Vagina (tissue), 2 donors: ENCODE measurements at regions of chr2 and their contacts with region 1.

Region 1: DNA sequence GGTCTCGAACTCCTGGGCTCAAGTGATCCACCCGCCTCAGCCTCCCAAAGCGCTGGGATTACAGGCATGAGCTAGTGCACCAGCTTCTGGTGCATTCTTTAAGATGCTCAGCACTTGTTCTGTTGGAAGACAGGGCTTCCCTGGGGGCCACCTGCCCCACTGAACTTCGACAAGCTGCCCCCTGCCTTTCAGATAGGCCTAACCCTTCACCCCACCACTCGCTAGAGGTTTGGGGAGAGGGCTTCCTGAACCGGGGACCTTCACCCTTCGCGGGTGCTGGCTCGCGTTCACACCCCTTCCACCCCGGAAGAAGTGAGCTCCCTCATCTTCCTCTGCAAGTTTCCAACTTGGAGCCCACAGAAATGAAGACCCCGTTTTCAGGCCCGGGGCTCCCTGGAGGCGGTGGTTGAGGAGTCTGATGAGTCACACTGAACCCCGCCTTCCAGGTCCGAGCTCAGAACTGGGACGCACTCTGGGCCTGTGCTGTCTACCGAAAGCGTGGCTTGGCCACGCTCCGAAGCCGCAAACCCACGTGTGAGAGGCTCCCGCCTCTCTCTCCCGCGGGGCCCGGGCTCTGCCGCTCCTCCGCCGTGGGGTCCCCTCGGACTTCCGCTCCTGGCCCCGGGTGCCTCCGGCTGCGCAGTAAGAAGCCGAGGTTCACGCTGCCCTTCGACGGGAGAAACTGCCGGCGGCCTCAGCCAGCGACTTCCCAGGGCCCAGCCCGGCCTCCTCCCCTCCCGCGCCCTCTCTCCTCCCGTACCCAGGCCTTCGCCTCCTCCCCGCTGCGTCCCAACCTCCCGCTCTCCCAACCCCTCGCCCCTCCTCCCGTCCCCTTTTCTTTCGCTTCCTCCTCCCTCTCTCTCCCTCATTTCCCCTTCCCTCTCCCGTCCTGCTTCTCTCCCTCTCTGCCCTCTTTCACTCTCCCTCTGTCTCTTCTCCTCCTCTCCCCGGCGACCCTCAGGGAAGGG is 47.5 kb upstream of the SP3 start:
- DNase-seq: peak in 1 of 2 donors; percentile 91
- H3K4me3 ChIP-seq: peak overlapping the region; percentile 45 to 56
- H3K27ac ChIP-seq: peak overlapping the region; percentile 93
- H3K4me1 ChIP-seq: peaks cover 50% of the 10 kb centered on the region
- H3K27me3 ChIP-seq: no peaks in the 10 kb centered on the region
- CTCF ChIP-seq: no peak
- POLR2A ChIP-seq: peak in 1 of 2 donors; percentile 13

Region 2: DNA sequence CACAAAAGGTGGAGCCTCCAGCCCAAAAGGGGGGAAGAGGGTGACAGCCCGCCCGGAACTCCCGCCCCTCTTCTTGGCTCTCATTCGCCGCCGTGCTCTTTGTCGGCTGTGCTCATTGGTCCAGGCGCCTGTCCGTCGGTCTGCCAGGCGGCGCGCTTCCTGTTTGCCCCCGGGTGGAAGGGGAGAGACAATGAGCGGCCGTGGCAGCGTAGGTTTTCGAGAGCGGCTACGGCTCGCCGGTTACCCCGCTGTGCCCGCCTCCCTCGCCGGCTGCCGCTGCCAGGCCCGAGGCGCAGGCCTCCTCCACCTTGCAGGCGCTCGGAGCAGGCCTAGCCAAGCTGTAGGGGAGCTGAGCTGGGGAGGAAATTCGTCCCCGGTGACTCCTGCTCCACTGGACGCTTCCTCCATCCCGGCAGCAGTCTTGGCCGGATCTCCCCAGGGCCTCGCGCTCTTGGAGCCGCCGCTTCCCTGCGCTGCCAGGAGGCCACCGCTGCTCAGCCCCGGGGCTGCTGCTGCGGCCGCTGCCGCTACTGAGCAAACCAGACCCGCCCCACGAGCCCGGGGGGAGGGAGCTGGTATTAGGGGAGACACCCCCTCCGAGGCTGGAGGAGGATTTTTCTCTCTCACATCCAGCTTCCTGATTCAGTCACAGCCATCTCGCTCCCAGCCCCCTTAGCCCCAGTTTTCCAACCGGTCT is 47.2 kb before region 1 on chr2 and contains the start of gene SP3:
- intact Hi-C with region 1: loop called (anchors 10 kb)
- DNase-seq: peak in 1 of 2 donors; percentile 98
- H3K4me3 ChIP-seq: peak within 1 kb of the TSS; percentile 64 to 96
- H3K27ac ChIP-seq: peak within 1 kb of the TSS; percentile 100
- H3K4me1 ChIP-seq: peaks cover 38% of the 10 kb centered on the region
- H3K27me3 ChIP-seq: no peaks in the 10 kb centered on the region
- CTCF ChIP-seq: peak in 2 of 3 experiments; percentile 5 to 9
- POLR2A ChIP-seq: peak in 1 of 2 donors; percentile 85
- total RNA-seq, gene SP3: 119 TPM